ENCODE measurements at regions of chr10 and their contacts with region 1.

Region 1: DNA sequence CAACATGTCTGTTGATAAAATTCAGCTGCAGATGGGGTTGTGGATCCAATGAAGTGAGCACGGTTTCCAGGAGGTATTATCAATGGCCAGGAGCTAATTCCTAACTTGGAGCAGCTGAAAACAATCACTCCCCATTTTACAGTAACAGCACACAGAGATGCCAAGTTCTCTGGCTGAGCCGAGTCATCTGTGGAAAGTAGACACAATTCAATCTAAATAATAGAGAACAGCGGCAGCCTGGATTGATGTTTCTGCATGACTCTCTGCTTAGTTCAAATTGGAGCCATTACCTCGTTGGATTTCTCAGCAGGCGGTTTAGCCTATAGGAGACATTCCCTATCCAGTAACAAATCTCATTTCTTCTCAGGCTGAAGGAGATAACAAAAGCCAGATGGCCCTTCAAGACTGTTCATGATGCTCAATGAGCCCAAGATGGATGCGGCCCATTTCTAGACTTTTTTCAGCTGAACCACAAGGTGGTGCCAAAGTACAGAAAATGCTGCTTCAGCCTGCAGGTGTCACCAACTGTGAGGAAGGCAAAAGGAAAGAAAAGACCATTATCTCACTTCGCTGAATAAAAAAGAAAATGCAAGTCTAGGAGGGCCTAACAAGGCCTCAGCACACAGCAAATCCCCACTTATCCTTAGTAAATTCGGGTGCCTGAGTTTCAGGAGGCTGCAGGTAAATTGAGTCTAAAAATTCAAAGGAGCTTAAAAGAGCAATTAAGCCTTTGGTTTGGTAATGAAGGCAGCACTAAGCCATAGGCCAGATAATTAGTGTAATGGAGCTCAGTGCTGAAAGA is 83.7 kb downstream of the SLC16A9 start:
- DNase-seq: peak; percentile 35
- ATAC-seq: peak; percentile 96
- H3K4me3 ChIP-seq: no peak overlapping the region
- H3K27ac ChIP-seq: no peak overlapping the region
- H3K4me1 ChIP-seq: no peaks in the 10 kb centered on the region; the same call in 1 of the 2 replicates
- H3K27me3 ChIP-seq: no peaks in the 10 kb centered on the region
- CTCF ChIP-seq: peak; percentile 66 to 93 (median 80); a peak in 5 of 6 replicates
- EP300 ChIP-seq: no peak
- POLR2A ChIP-seq: no peak
- RAD21 ChIP-seq: peak; percentile 100

Region 2: GRCh38 chr10:58531084-58531695 is 1094.7 kb before region 1 on chr10:
- CTCF ChIA-PET with region 1: interaction called, 17 read pairs
- POLR2A ChIA-PET with region 1: no interaction called
- RAD21 ChIA-PET with region 1: no interaction called
- SMC1A ChIA-PET with region 1: no interaction called
- in situ Hi-C with region 1: no loop called
- intact Hi-C with region 1: no loop called
- DNase-seq: peak; percentile 16
- ATAC-seq: peak; percentile 93
- H3K4me3 ChIP-seq: no peak overlapping the region
- H3K27ac ChIP-seq: no peak overlapping the region
- H3K4me1 ChIP-seq: no peaks in the 10 kb centered on the region
- H3K27me3 ChIP-seq: no peaks in the 10 kb centered on the region
- CTCF ChIP-seq: peak; percentile 68 to 79 (median 75)
- EP300 ChIP-seq: no peak
- POLR2A ChIP-seq: no peak
- RAD21 ChIP-seq: peak; percentile 73

Region 3: DNA sequence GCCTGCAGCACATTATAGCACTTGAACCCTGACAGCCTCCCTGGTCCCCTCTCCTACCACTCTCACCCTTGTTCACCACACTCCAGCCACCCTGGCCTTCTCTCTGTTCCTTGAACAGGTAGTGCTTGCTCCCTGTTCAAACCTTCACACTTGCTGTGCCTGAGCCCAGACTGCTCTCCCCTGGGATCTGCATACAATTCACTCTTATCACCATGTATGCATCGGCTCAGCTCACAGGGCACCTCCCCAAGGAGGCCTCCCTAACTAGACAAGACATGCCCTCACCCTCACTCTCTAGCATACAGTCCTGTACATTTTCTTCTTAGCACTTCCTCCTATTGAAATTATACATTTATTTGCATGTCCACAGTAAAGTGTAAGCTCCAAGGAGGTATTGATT is 322.9 kb before region 1 on chr10:
- CTCF ChIA-PET with region 1: no interaction called
- POLR2A ChIA-PET with region 1: no interaction called
- RAD21 ChIA-PET with region 1: no interaction called
- SMC1A ChIA-PET with region 1: no interaction called
- in situ Hi-C with region 1: no loop called
- intact Hi-C with region 1: no loop called
- DNase-seq: no peak
- ATAC-seq: peak; percentile 70
- H3K4me3 ChIP-seq: no peak overlapping the region
- H3K27ac ChIP-seq: no peak overlapping the region
- H3K4me1 ChIP-seq: no peaks in the 10 kb centered on the region
- H3K27me3 ChIP-seq: no peaks in the 10 kb centered on the region
- CTCF ChIP-seq: no peak
- EP300 ChIP-seq: no peak
- POLR2A ChIP-seq: no peak
- RAD21 ChIP-seq: no peak

Region 4: DNA sequence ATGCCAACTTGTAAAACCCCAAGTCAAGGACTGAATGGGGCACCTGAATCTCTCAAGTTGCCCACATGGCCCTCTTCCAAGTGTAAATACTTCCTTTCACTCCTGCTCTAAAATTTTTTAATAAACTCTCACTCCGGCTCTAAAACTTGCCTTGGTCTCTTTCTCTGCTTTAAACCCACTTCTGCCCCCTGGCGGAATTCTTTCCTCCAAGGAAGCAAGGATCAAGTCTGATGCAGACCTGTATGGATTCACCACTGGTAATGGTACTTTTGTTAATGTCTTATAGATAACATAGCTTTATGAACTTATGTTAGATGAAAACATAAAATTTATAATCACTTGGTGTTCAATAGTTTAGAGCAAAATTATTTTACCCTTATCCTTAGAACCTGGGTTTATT is 49.9 kb after region 1 on chr10:
- CTCF ChIA-PET with region 1: interaction called, 3 read pairs
- POLR2A ChIA-PET with region 1: no interaction called
- RAD21 ChIA-PET with region 1: interaction called, 3 read pairs
- SMC1A ChIA-PET with region 1: interaction called, 5 read pairs
- in situ Hi-C with region 1: no loop called
- intact Hi-C with region 1: loop called (anchors 1 kb)
- DNase-seq: no peak
- ATAC-seq: peak; percentile 30; the same call in 1 of the 3 replicates
- H3K4me3 ChIP-seq: no peak overlapping the region
- H3K27ac ChIP-seq: no peak overlapping the region
- H3K4me1 ChIP-seq: peaks cover 5% of the 10 kb centered on the region
- H3K27me3 ChIP-seq: no peaks in the 10 kb centered on the region
- CTCF ChIP-seq: peak in 1 of 3 experiments; percentile 20; a peak in 2 of 6 replicates
- EP300 ChIP-seq: no peak
- POLR2A ChIP-seq: no peak
- RAD21 ChIP-seq: peak; percentile 9; the same call in 1 of the 2 replicates

Region 5: DNA sequence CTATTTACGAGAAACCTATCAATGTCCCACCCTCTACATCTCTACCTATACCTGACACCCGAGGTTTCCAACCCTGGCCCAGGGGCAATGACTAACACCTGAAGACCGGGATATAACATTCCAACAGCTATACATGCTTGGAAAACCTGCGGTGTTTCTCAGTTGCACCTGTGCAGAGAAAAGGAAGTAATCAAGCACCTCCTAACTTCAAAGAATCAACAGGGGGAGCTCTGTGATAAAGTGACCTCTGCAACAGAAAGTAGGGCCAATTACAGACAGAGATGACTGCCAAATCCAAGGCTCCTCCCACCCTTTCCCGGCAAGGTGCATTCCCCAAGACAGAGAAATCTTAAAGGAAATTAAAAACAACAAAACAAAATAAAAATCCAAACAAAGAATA is 239.2 kb after region 1 on chr10:
- CTCF ChIA-PET with region 1: interaction called, 12 read pairs
- POLR2A ChIA-PET with region 1: no interaction called
- RAD21 ChIA-PET with region 1: interaction called, 8 read pairs
- SMC1A ChIA-PET with region 1: interaction called, 5 read pairs
- in situ Hi-C with region 1: no loop called
- intact Hi-C with region 1: no loop called
- DNase-seq: no peak
- ATAC-seq: peak; percentile 91
- H3K4me3 ChIP-seq: no peak overlapping the region
- H3K27ac ChIP-seq: no peak overlapping the region
- H3K4me1 ChIP-seq: peaks cover 7% of the 10 kb centered on the region
- H3K27me3 ChIP-seq: no peaks in the 10 kb centered on the region
- CTCF ChIP-seq: peak; percentile 54 to 75 (median 58)
- EP300 ChIP-seq: no peak
- POLR2A ChIP-seq: no peak
- RAD21 ChIP-seq: peak; percentile 90

Region 6: DNA sequence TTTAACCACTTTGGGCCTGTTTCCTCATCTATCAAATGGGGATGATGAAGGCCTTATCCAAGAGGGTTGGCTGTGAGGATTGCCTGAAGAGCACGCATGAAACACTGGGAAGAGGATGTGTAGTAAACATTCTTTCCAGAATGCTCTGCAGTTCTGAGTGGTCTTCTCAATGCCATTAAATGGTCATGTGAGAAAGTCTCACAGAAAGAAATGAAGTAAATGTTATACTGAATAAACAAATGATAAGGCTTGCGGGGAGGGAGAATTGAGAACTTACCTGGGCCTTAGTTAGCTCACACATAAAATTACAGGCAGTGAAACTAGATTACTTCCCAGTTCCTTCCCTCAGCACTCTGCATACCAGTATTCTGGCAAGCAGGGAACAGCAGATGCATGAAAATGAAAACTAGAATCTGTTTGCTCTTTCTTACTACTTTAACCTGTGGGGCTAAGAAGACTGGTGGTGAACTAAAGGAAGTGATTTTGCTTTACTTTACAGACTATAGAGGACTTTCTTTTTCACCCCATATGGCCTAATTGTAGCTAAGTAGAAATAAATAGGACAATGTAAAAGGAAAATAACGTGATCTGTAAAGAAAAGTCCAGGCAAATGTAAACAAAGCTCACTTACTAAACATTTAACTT is 415.7 kb after region 1 on chr10:
- CTCF ChIA-PET with region 1: interaction called, 17 read pairs
- POLR2A ChIA-PET with region 1: no interaction called
- RAD21 ChIA-PET with region 1: no interaction called
- SMC1A ChIA-PET with region 1: interaction called, 18 read pairs
- in situ Hi-C with region 1: no loop called
- intact Hi-C with region 1: no loop called
- DNase-seq: no peak
- ATAC-seq: no peak
- H3K4me3 ChIP-seq: no peak overlapping the region
- H3K27ac ChIP-seq: no peak overlapping the region
- H3K4me1 ChIP-seq: peaks cover 6% of the 10 kb centered on the region; the same call in 1 of the 2 replicates
- H3K27me3 ChIP-seq: no peaks in the 10 kb centered on the region
- CTCF ChIP-seq: no peak
- EP300 ChIP-seq: no peak
- POLR2A ChIP-seq: no peak
- RAD21 ChIP-seq: no peak

Region 7: DNA sequence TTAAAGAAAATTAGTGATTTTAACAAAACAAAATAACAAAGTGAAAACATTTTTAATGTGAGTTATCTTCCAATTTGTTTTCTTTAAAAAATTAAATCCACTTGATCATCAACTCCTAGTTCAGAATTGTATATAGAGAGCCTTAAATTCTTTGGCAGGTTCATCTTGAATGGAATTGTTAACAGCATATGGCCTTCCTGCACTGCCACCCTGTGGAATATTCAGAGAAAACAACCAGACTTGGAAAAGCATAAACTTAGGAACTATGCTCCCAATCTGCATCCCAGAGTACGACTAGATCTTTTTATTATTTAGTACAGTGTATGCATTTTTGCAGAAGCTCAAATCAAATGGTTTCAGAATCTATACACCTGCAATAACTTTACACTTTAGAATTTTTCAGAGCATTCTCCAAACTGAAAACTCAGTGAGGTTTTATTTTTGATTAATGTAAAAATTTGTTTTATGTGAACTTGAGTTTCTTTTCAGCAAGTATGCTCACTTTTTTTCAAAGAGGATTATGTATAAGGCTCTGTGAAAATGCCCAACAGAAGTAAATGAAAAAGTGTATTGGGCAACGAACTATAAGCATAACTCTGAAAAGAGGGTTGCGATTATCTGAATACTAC is 808.6 kb after region 1 on chr10:
- CTCF ChIA-PET with region 1: interaction called, 5 read pairs
- POLR2A ChIA-PET with region 1: no interaction called
- RAD21 ChIA-PET with region 1: no interaction called
- SMC1A ChIA-PET with region 1: interaction called, 3 read pairs
- in situ Hi-C with region 1: loop called (anchors 10 kb)
- intact Hi-C with region 1: loop called (anchors 5 kb)
- DNase-seq: no peak
- ATAC-seq: peak; percentile 64
- H3K4me3 ChIP-seq: no peak overlapping the region
- H3K27ac ChIP-seq: no peak overlapping the region
- H3K4me1 ChIP-seq: no peaks in the 10 kb centered on the region
- H3K27me3 ChIP-seq: no peaks in the 10 kb centered on the region
- CTCF ChIP-seq: peak; percentile 42 to 69 (median 46); a peak in 5 of 6 replicates
- EP300 ChIP-seq: no peak
- POLR2A ChIP-seq: no peak
- RAD21 ChIP-seq: peak; percentile 93